CD8-positive, alpha-beta T cell (primary cell): ENCODE measurements at regions of chr3 and their contacts with region 1.

Region 1: GRCh38 chr3:129606636-129607390 is at the start of gene PLXND1:
- DNase-seq: peak in 7 of 9 experiments; percentile 22 to 77 (median 53)
- ATAC-seq: peak; percentile 66
- H3K4me3 ChIP-seq: peak within 1 kb of the TSS; percentile 49 to 59
- H3K4me3 Mint-ChIP-seq: peak within 1 kb of the TSS; percentile 96
- H3K27ac ChIP-seq: no peak within 1 kb of the TSS
- H3K27ac Mint-ChIP-seq: peak within 1 kb of the TSS; percentile 92
- H3K4me1 ChIP-seq: peaks cover 15% of the 10 kb centered on the region
- H3K4me1 Mint-ChIP-seq: peaks cover 25% of the 10 kb centered on the region
- H3K27me3 ChIP-seq: peaks cover 5 to 7% of the 10 kb centered on the region in 2 experiments
- H3K27me3 Mint-ChIP-seq: peaks cover 14% of the 10 kb centered on the region
- CTCF ChIP-seq: no peak
- total RNA-seq, gene PLXND1: 84.7 to 96.8 TPM

Region 2: DNA sequence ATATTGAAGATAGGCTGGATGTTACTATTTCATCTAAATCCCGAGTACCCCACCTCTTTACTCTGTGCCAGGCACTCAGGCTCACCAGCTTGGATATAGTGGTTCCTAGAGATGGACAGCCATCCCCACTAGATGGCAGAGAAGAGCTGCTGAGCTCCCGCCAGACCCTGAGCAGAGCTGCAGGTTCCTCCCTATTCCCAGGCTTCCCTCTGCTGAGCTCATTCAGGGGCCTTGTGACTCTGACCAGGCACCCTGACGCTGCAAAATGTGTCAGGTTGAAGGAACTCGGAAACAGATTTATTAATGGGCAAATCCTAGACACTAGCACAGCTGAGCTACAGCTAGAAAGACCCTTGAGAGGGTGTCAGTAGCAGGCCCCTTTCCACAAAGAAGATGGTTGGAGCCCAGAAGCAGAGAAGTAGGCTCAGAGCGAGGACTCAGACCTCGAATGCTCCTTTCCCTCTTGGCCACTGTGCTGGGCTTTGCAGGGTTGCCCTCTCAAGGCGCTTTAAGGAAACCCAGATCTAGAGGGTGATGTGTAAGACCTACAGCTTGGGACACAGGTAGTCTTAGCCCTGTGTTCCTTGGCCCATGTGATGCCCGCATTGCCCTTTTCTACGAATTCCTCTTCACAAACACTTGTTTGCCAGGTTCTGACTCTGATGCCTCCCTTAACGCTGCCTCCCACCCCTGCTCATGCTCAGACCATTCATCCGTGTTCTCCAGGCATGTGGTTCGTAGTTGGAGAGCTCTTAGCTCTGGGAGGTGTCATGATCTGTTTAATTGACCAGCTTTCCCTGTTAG is 116.4 kb before region 1 on chr3:
- CTCF ChIA-PET with region 1: interaction called, 8 read pairs
- POLR2A ChIA-PET with region 1: interaction called, 4 read pairs
- intact Hi-C with region 1: loop called (anchors 1 to 5 kb)
- DNase-seq: peak; percentile 27 to 79 (median 49)
- ATAC-seq: peak; percentile 97
- H3K4me3 ChIP-seq: no peak overlapping the region
- H3K4me3 Mint-ChIP-seq: no peak overlapping the region
- H3K27ac ChIP-seq: no peak overlapping the region
- H3K27ac Mint-ChIP-seq: no peak overlapping the region
- H3K4me1 ChIP-seq: no peaks in the 10 kb centered on the region
- H3K4me1 Mint-ChIP-seq: peaks cover 2% of the 10 kb centered on the region
- H3K27me3 ChIP-seq: no peaks in the 10 kb centered on the region
- H3K27me3 Mint-ChIP-seq: no peaks in the 10 kb centered on the region
- CTCF ChIP-seq: peak; percentile 72

Region 3: DNA sequence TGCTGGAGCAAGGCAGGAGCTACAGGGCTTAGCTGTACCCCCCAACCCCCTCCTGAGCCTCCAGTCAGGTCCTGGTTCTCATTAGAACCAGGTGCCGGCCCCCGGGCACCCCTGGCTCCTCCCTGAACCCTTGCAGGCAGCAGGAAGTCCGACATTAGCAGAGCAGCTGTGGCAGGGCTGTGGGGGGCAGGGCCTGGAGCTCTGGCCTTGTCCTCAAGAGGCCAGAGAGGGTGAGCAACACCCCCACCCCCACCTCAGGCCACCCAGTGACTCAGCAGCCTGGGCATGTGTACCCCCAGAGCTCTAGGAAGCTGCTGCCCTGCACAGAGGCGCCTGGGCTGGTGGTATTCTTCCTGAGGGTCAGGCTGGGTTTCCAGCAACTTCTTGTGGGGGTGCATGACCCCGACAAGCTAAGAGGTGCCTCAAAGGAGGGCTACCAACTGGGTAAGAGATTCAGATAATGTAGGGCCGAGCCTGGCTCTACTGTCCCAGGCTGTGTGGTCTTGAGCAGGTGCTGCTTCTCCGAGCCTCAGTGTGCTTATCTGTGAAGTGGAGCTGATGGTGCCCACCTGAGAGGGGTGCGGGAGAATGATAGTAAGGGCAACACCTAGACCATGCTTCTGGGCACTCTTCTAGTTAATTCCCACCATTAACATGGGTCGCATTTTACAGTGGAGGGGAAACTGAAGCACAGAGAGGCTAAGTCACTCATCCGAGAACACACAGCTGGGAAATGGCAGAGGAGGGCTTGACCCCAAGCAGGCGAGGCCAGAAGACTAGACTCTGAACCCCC is 47.8 kb before region 1 on chr3:
- CTCF ChIA-PET with region 1: interaction called, 3 read pairs
- POLR2A ChIA-PET with region 1: no interaction called
- intact Hi-C with region 1: loop called in 1 of 2 experiments (anchors 10 kb)
- DNase-seq: no peak
- ATAC-seq: peak; percentile 8
- H3K4me3 ChIP-seq: no peak overlapping the region
- H3K4me3 Mint-ChIP-seq: no peak overlapping the region
- H3K27ac ChIP-seq: peak overlapping the region in 1 of 2 experiments; percentile 62
- H3K27ac Mint-ChIP-seq: no peak overlapping the region
- H3K4me1 ChIP-seq: peaks cover 4% of the 10 kb centered on the region
- H3K4me1 Mint-ChIP-seq: peaks cover 21% of the 10 kb centered on the region
- H3K27me3 ChIP-seq: no peaks in the 10 kb centered on the region
- H3K27me3 Mint-ChIP-seq: no peaks in the 10 kb centered on the region
- CTCF ChIP-seq: no peak

Region 4: DNA sequence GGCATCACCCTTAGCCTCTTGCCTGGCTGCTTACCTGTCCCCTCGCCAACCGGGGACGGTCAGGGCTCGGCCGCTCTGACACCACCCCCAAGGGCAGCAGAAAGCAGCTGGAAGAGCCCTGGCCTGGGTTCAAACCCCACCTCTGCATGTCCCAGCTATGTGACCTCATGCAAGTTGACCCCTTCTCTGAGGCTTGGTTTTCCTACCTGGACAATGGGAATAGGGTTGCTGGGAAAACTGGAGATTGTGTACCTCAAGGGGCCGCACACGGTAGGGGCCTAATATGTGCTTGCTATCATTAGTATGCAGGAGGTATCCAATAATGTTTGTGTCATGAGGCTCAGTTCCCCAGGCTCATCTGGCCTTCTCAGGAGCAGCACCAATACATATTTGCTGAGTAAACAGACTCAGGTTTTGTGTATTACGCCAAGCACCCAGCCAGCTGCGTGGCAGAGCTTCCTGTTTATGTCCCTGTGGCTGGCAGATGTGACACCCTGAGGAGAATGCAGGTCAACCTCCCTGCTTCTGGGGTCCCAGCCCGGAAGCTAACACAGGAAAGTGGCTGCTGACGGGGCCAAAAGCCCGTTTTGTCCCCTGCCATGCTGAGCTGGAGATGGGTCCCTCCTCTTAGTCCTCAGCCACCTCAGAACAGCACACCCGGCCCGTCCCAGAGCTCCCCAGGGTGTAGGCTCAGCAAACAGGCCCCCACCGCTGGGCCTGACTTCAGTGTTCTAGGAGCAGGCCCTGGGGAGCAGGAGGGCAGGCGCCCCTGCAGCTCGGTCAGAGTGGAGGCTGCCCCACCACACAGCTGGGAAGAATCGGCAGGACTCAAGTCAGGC is 30.1 kb before region 1 on chr3:
- CTCF ChIA-PET with region 1: interaction called, 8 read pairs
- POLR2A ChIA-PET with region 1: interaction called, 43 read pairs
- intact Hi-C with region 1: loop called (anchors 1 to 2 kb)
- DNase-seq: peak; percentile 57 to 94 (median 76)
- ATAC-seq: peak; percentile 86
- H3K4me3 ChIP-seq: no peak overlapping the region
- H3K4me3 Mint-ChIP-seq: peak overlapping the region; percentile 45
- H3K27ac ChIP-seq: peak overlapping the region; percentile 12 to 89
- H3K27ac Mint-ChIP-seq: peak overlapping the region; percentile 95
- H3K4me1 ChIP-seq: peaks cover 39% of the 10 kb centered on the region
- H3K4me1 Mint-ChIP-seq: peaks cover 50% of the 10 kb centered on the region
- H3K27me3 ChIP-seq: no peaks in the 10 kb centered on the region
- H3K27me3 Mint-ChIP-seq: no peaks in the 10 kb centered on the region
- CTCF ChIP-seq: no peak

Region 5: DNA sequence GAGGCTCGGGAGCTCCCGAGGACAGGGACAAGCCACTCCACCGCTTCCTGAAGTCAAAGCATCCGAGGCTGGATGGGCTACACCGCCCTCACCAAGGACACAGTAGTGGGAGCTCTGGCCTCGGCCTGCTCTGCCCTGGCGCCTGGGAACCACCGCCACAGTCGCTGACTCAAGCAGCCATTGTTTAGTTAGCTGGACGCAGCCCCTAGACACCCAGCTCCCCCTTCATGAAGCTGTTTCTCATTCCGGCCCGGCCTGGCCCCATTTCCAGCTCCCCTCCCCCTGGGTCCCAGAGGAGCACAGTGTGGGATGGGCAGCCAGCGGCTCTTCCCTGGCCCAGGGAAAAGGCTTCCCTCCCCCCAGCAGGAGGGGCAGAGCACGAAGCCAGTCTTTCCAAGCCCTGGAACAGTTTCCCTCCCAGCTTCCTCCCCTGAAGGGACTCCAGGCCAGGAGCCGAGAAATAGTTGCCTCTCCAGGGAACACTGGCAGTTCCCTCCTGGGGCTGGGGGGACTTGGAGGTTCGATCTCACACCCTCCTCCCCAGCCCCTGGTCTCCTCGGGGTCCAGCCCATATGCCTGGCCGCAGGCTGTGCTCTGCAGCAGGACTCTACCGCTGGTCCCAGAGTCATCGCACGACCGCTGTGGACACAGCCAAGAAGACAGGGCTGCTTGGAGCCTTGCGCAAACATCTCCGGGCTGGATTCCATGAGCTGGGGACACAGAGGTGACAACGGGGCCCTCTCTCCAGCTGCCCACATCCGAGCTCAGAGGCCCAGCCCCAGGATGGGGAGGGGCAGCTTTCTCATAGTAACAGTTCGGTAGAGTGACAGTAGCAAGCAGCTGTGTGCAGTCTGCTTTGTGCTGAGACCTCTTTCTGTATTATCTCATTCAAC is 10.4 kb before region 1 on chr3:
- CTCF ChIA-PET with region 1: interaction called, 7 read pairs
- POLR2A ChIA-PET with region 1: interaction called, 8 read pairs
- intact Hi-C with region 1: loop called in 1 of 2 experiments (anchors 1 kb)
- DNase-seq: peak in 1 of 9 experiments; percentile 31
- ATAC-seq: no peak
- H3K4me3 ChIP-seq: no peak overlapping the region
- H3K4me3 Mint-ChIP-seq: no peak overlapping the region
- H3K27ac ChIP-seq: no peak overlapping the region
- H3K27ac Mint-ChIP-seq: no peak overlapping the region
- H3K4me1 ChIP-seq: peaks cover 32% of the 10 kb centered on the region
- H3K4me1 Mint-ChIP-seq: peaks cover 47% of the 10 kb centered on the region
- H3K27me3 ChIP-seq: no peaks in the 10 kb centered on the region
- H3K27me3 Mint-ChIP-seq: peaks cover 2% of the 10 kb centered on the region
- CTCF ChIP-seq: no peak

Region 6: DNA sequence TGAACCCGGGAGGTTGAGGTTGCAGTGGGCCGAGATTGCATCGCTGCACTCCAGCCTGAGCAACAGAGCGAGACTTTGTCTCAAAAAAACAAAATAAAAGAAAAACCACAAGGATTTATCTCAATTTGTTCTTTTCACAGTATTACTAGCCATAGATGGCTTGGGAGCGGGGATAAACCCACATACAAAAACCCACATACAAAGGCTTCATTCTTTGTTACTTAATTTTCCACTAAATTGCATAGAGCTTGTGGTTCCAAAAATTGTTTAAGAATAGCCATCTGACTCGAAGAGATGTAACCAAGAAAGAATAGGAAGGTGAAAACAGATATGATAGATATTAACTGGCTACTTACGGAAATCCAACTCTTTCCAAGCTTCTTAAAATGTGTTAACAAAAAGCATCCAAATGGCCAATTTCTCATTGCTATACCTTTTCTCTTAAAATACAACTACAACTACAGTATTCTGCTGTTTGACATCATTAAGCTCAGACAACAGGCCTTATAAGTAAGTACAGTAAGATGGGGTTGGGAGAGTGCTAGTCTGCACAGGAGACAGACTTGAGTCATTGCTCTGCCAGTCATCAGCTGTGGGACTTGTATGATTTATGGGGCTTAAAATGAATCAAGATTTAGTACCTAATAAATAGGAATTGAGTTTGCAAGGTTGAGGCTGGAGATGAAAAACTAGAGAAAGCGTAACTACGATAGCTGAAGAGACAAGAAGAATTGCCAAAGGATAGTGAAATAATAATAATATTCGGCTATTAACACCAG is 96.3 kb after region 1 on chr3:
- CTCF ChIA-PET with region 1: no interaction called
- POLR2A ChIA-PET with region 1: no interaction called
- intact Hi-C with region 1: no loop called
- DNase-seq: no peak
- ATAC-seq: no peak
- H3K4me3 ChIP-seq: no peak overlapping the region
- H3K4me3 Mint-ChIP-seq: no peak overlapping the region
- H3K27ac ChIP-seq: no peak overlapping the region
- H3K27ac Mint-ChIP-seq: no peak overlapping the region
- H3K4me1 ChIP-seq: no peaks in the 10 kb centered on the region
- H3K4me1 Mint-ChIP-seq: no peaks in the 10 kb centered on the region
- H3K27me3 ChIP-seq: no peaks in the 10 kb centered on the region
- H3K27me3 Mint-ChIP-seq: no peaks in the 10 kb centered on the region
- CTCF ChIP-seq: no peak

Region 7: GRCh38 chr3:130111185-130111864 is 504.5 kb after region 1 on chr3:
- CTCF ChIA-PET with region 1: no interaction called
- POLR2A ChIA-PET with region 1: no interaction called
- intact Hi-C with region 1: loop called in 1 of 2 experiments (anchors 5 kb)
- DNase-seq: peak; percentile 97 to 100 (median 99)
- ATAC-seq: peak; percentile 100
- H3K4me3 ChIP-seq: peak overlapping the region; percentile 69 to 89
- H3K4me3 Mint-ChIP-seq: peak overlapping the region; percentile 99
- H3K27ac ChIP-seq: peak overlapping the region; percentile 82 to 95
- H3K27ac Mint-ChIP-seq: peak overlapping the region; percentile 100
- H3K4me1 ChIP-seq: peaks cover 3% of the 10 kb centered on the region
- H3K4me1 Mint-ChIP-seq: peaks cover 28% of the 10 kb centered on the region
- H3K27me3 ChIP-seq: no peaks in the 10 kb centered on the region
- H3K27me3 Mint-ChIP-seq: no peaks in the 10 kb centered on the region
- CTCF ChIP-seq: no peak